Activated CD4-positive, alpha-beta T cell treated with anti-CD3 and anti-CD28 coated beads for 36 hours (primary cell): ENCODE measurements at regions of chr15 and their contacts with region 1.

Region 1: GRCh38 chr15:44545913-44546802 is 9.2 kb downstream of the EIF3J start:
- DNase-seq: peak; percentile 72
- ATAC-seq: peak; percentile 94
- H3K4me3 Mint-ChIP-seq: peak overlapping the region; percentile 51
- H3K27ac Mint-ChIP-seq: peak overlapping the region; percentile 85
- H3K4me1 Mint-ChIP-seq: peaks cover 58% of the 10 kb centered on the region
- H3K27me3 Mint-ChIP-seq: no peaks in the 10 kb centered on the region

Region 2: GRCh38 chr15:44519537-44519936 is 26.6 kb before region 1 on chr15:
- CTCF ChIA-PET with region 1: no interaction called
- POLR2A ChIA-PET with region 1: no interaction called
- intact Hi-C with region 1: loop called in 1 of 2 experiments (anchors 1 kb)
- DNase-seq: no peak
- ATAC-seq: no peak
- H3K4me3 Mint-ChIP-seq: no peak overlapping the region
- H3K27ac Mint-ChIP-seq: no peak overlapping the region
- H3K4me1 Mint-ChIP-seq: no peaks in the 10 kb centered on the region
- H3K27me3 Mint-ChIP-seq: no peaks in the 10 kb centered on the region

Region 3: DNA sequence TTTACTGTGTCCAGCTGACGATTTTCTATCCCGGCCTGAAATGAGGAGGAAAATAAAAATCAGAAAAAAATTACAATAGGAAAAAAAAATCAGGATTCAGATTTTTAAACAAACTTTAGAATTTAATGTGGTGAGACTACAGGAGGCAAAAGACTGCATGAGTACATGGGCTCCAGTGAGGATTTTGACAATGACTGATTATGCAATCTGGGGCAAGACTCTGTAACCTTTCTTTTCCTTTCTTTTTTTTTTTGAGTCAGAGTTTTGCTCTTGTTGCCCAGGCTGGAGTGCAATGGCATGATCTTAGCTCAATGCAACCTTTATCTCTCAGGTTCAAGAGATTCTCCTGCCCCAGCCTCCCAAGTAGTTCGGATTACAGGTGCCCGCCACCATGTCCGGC is 87.4 kb after region 1 on chr15:
- CTCF ChIA-PET with region 1: interaction called, 3 read pairs
- POLR2A ChIA-PET with region 1: no interaction called
- intact Hi-C with region 1: loop called in 1 of 2 experiments (anchors 1 kb)
- DNase-seq: peak; percentile 13
- ATAC-seq: peak; percentile 77
- H3K4me3 Mint-ChIP-seq: peak overlapping the region; percentile 65
- H3K27ac Mint-ChIP-seq: peak overlapping the region; percentile 98
- H3K4me1 Mint-ChIP-seq: peaks cover 26% of the 10 kb centered on the region
- H3K27me3 Mint-ChIP-seq: no peaks in the 10 kb centered on the region

Region 4: DNA sequence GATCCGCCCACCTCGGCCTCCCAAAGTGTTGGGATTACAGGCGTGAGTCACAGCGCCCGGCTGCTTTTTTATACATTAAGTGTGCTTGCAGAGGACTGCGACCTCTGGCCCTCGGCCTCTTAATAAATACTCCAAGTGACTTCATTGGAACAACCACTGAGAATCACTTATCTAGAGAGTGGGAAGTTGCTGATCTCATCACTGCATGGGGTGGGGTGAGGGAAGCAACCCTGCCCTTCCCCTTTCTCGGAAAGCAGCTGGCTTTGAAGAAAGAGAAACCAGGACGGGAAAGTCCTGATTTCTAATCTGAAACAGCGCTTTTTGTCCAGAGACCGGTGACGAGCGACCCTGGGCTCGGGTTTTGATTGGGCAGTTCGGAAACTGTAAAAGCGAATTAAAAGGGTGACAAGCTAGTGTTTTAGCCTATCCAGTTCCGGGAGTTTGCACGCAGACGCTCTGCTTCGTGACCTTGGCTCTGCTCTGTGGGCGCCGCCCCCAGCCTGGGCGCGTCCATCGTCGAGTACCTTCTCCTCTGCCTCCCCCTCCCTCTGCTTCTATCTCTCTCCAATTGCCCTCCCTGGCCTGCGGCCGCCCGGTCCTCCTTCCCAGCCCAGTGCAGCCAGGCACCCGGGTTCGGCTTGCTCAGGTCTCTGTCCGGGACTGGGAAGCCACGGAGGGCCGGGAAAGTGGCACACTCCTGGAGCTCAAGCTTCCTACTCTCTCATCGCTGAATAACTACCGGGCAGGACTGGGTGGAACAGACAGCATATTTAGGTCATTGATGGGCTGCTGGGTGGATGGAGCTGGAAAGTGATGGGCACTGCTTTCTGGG is 182.6 kb after region 1 on chr15:
- CTCF ChIA-PET with region 1: interaction called, 3 read pairs
- POLR2A ChIA-PET with region 1: no interaction called
- intact Hi-C with region 1: loop called in 1 of 2 experiments (anchors 1 kb)
- DNase-seq: peak; percentile 96
- ATAC-seq: peak; percentile 78
- H3K4me3 Mint-ChIP-seq: peak overlapping the region; percentile 91
- H3K27ac Mint-ChIP-seq: peak overlapping the region; percentile 99
- H3K4me1 Mint-ChIP-seq: peaks cover 68% of the 10 kb centered on the region
- H3K27me3 Mint-ChIP-seq: no peaks in the 10 kb centered on the region

Region 5: GRCh38 chr15:44882499-44882968 is 336.4 kb after region 1 on chr15:
- CTCF ChIA-PET with region 1: no interaction called
- POLR2A ChIA-PET with region 1: no interaction called
- intact Hi-C with region 1: loop called in 1 of 2 experiments (anchors 1 kb)
- DNase-seq: peak; percentile 74
- ATAC-seq: peak; percentile 94
- H3K4me3 Mint-ChIP-seq: peak overlapping the region; percentile 29
- H3K27ac Mint-ChIP-seq: peak overlapping the region; percentile 35
- H3K4me1 Mint-ChIP-seq: peaks cover 32% of the 10 kb centered on the region
- H3K27me3 Mint-ChIP-seq: peaks cover 8% of the 10 kb centered on the region